ENCODE measurements at regions of chr4 and their contacts with region 1.

Region 1: GRCh38 chr4:98522636-98523395 is 135.6 kb downstream of the TSPAN5 start:
- DNase-seq: no peak
- H3K4me3 Mint-ChIP-seq: no peak overlapping the region
- H3K27ac Mint-ChIP-seq: no peak overlapping the region
- H3K4me1 Mint-ChIP-seq: peaks cover 67% of the 10 kb centered on the region
- H3K27me3 Mint-ChIP-seq: no peaks in the 10 kb centered on the region

Region 2: DNA sequence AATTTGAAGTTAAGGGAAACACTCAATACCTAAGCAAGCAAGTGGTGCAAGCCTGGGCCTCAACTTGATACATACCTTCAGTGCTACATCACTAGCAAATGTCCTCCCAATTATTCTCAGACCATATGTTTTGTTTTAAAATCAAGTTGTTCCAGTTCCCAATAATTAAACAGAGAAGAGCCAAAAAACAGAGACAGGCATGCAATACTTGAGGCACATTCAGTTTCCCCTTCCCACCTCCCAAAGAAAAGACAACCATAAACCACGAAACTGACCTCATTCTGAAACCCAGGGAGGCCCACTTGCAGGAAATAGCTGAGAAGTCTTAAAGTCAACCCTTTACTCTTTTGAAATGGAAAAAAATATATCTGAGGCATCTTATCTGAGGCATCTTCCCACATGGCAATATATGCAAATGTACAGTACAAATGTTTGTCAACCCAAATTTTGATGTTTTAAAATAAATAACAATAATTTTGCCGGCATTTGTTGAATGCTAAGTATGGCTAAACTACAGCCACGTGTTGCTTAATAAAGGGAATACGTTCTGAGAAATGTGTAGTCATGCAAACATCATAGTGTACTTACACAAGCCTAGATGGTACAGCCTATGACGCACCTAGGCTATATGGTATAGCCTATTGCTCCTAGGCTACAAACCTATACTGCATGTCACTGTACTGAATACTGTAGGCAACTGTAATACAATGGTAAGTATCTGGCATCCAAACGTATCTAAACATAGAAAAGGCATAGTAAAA is 11.9 kb before region 1 on chr4:
- CTCF ChIA-PET with region 1: interaction called, 3 read pairs
- POLR2A ChIA-PET with region 1: no interaction called
- intact Hi-C with region 1: loop called (anchors 2 kb)
- DNase-seq: peak; percentile 69
- H3K4me3 Mint-ChIP-seq: no peak overlapping the region
- H3K27ac Mint-ChIP-seq: peak overlapping the region; percentile 24
- H3K4me1 Mint-ChIP-seq: peaks cover 55% of the 10 kb centered on the region
- H3K27me3 Mint-ChIP-seq: no peaks in the 10 kb centered on the region